Activated CD4-positive, alpha-beta T cell treated with anti-CD3 and anti-CD28 coated beads for 36 hours (primary cell): ENCODE measurements at regions of chr3 and their contacts with region 1.

Region 1: DNA sequence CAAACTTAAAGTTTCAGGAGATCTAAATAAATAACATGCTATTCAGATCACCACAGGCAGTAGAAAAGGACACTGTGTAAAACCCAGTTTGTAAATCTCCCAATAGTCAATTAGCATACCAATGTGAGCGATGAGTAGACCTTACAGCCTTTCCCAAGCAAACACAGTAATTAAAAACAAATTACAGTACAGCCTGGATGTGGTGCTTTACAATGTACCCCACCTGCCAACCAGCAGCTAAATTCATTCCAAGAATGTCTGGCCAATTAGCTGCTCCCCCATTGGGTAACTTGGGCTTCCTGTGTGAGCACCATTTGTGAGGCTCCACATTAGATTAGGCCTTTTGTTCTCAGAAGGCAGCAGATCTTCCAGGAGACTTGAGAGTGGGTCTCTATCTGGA is 635.0 kb downstream of the TBL1XR1 start:
- DNase-seq: no peak
- ATAC-seq: no peak
- H3K4me3 Mint-ChIP-seq: no peak overlapping the region
- H3K27ac Mint-ChIP-seq: no peak overlapping the region
- H3K4me1 Mint-ChIP-seq: no peaks in the 10 kb centered on the region
- H3K27me3 Mint-ChIP-seq: no peaks in the 10 kb centered on the region

Region 2: DNA sequence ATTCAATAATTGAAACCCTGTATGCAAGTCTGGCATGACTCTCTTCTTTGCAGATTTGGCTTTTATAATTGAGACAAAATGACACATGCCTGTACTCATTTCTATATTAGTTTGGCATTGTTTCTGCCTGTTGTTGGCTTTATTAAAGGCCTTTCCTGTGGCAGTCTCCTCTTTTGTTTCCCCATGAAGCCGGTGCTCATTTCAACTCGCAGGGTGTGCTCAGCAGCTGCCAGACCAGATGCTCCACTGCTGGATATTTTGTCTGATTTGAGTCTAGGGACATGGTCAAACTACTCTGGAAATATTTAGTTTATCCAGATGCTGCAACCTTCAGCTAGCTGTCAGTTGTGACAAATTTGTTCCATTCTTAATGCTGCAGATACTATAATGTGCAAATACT is 1257.9 kb before region 1 on chr3:
- CTCF ChIA-PET with region 1: no interaction called
- POLR2A ChIA-PET with region 1: no interaction called
- intact Hi-C with region 1: loop called in 1 of 2 experiments (anchors 5 kb)
- DNase-seq: no peak
- ATAC-seq: no peak
- H3K4me3 Mint-ChIP-seq: no peak overlapping the region
- H3K27ac Mint-ChIP-seq: no peak overlapping the region
- H3K4me1 Mint-ChIP-seq: peaks cover 4% of the 10 kb centered on the region
- H3K27me3 Mint-ChIP-seq: no peaks in the 10 kb centered on the region